Natural killer cell (primary cell): ENCODE measurements at regions of chr7 and their contacts with region 1.

Region 1: GRCh38 chr7:140517546-140518369 is 38.5 kb upstream of the MKRN1 start:
- DNase-seq: peak; percentile 34 to 75
- ATAC-seq: peak; percentile 44 to 72 (median 53)
- H3K4me3 ChIP-seq: no peak overlapping the region
- H3K4me3 Mint-ChIP-seq: no peak overlapping the region
- H3K27ac ChIP-seq: no peak overlapping the region
- H3K27ac Mint-ChIP-seq: no peak overlapping the region
- H3K4me1 ChIP-seq: peaks cover 3% of the 10 kb centered on the region
- H3K4me1 Mint-ChIP-seq: peaks cover 0 to 11% of the 10 kb centered on the region in 2 donors
- H3K27me3 ChIP-seq: no peaks in the 10 kb centered on the region
- H3K27me3 Mint-ChIP-seq: peaks cover 0 to 2% of the 10 kb centered on the region in 2 donors
- CTCF ChIP-seq: peak; percentile 50

Region 2: DNA sequence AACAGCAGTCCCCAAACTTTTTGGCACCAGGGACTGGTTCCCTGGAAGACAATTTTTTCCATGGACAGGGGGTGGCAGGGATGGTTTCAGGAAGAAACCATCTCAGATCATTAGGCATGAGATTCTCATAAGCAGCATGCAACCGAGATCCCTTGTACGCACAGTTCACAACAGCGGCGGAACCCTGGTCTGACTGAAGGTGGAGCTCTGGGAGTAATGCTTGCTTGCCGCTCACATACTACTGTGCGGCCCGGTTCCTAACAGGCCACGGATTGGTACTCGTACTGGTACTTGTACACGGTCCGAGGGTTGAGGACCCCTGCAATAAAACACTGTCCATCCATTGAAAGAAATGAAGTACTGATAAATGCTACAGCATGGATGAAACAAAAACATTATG is 71.3 kb before region 1 on chr7:
- intact Hi-C with region 1: no loop called
- DNase-seq: no peak
- ATAC-seq: no peak
- H3K4me3 ChIP-seq: no peak overlapping the region
- H3K4me3 Mint-ChIP-seq: no peak overlapping the region
- H3K27ac ChIP-seq: no peak overlapping the region
- H3K27ac Mint-ChIP-seq: no peak overlapping the region
- H3K4me1 ChIP-seq: peaks cover 6% of the 10 kb centered on the region
- H3K4me1 Mint-ChIP-seq: peaks cover 6 to 20% of the 10 kb centered on the region in 2 donors
- H3K27me3 ChIP-seq: no peaks in the 10 kb centered on the region
- H3K27me3 Mint-ChIP-seq: no peaks in the 10 kb centered on the region
- CTCF ChIP-seq: no peak

Region 3: DNA sequence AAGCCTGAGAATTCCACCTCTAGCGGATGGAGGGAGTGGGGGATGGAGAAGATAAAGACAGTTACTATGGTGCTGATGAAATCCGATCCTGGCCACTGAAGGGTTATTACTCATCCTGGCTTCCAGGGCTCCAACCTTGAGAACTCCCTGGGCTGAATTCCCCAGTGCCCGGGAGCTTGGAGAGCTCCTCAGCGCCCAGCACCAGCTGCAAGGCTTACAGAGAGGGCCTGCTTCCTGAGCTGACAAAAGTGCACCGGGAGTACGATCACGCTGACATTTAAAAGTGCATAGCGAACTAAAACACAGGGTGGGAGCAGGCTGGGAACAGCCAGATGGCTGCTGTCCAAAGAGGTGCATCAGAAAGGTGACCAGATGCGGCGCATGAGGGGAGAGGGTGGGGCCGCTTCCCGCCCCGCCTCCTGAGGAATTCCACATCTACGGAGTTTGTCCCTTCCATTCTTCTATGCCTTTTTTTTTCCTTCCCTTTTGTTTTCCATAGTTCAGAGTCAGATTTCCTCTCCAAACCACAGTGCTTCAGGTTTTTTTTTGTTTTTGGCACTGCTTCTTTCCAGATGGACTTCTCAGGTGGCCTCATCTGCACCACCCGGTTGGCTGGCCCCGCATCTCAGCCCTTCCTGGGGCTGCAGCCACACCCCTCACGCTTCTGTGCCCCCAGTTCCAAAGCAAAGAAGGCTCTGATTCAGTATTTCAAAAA is 23.9 kb after region 1 on chr7:
- intact Hi-C with region 1: no loop called
- DNase-seq: no peak
- ATAC-seq: no peak
- H3K4me3 ChIP-seq: no peak overlapping the region
- H3K4me3 Mint-ChIP-seq: no peak overlapping the region
- H3K27ac ChIP-seq: no peak overlapping the region
- H3K27ac Mint-ChIP-seq: no peak overlapping the region
- H3K4me1 ChIP-seq: no peaks in the 10 kb centered on the region
- H3K4me1 Mint-ChIP-seq: peaks cover 0 to 4% of the 10 kb centered on the region in 2 donors
- H3K27me3 ChIP-seq: no peaks in the 10 kb centered on the region
- H3K27me3 Mint-ChIP-seq: peaks cover 17% of the 10 kb centered on the region in 2 donors
- CTCF ChIP-seq: no peak

Region 4: GRCh38 chr7:140653319-140654108 is 135.8 kb after region 1 on chr7:
- intact Hi-C with region 1: loop called (anchors 10 kb)
- DNase-seq: peak in 1 of 2 donors; percentile 72
- ATAC-seq: peak in 2 of 3 donors; percentile 51 to 54
- H3K4me3 ChIP-seq: no peak overlapping the region
- H3K4me3 Mint-ChIP-seq: no peak overlapping the region
- H3K27ac ChIP-seq: no peak overlapping the region
- H3K27ac Mint-ChIP-seq: no peak overlapping the region
- H3K4me1 ChIP-seq: peaks cover 14% of the 10 kb centered on the region
- H3K4me1 Mint-ChIP-seq: peaks cover 25 to 30% of the 10 kb centered on the region in 2 donors
- H3K27me3 ChIP-seq: no peaks in the 10 kb centered on the region
- H3K27me3 Mint-ChIP-seq: peaks cover 0 to 14% of the 10 kb centered on the region in 2 donors
- CTCF ChIP-seq: peak; percentile 90